CD4-positive, alpha-beta memory T cell (primary cell): ENCODE measurements at regions of chr7 and their contacts with region 1.

Region 1: DNA sequence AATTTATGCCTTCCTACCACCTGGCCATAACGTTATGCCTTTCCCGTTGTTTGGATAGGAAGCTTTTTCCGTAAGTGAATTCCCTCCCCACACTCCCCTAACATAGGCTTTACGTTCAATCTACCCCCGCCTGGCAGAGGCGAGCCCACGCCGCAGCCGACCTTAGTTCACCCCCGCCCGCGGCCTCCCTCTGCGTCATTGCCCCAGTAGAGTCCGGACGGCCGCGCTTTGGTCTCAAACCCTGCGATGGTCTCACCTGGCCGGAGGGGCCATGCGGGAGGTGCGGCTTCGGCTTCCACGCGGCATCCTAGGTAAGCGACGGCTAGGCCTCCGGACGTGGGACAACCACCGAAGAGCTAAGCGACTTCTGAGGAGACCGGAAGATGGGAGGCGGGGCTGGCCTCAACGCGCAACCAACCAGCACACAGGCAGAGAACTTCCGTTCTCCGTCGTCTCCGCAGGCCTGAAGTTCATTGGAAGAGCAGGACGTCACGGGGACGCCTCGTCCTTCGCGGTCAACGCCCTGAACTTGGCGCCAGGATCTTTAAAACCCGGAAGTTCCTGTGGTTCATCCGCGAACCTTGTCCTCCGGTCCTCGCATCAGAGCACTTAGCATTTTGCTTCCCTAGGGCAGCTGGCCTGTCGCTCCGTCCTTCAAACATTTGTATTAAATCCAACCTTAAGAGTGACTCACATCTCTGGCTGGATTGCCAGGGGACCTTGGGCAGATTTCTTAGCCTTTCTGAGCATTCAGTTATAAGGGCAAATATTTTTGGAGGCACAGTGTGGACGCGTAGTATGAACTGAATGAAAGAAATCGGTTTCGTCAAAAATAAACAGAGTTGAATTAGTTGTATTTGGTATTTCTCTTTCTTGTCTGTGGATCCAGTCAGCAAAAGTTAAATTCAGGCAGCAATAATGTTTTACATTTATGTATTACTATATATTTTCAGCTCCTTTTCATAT is at the start of gene CHCHD2:
- DNase-seq: peak; percentile 92 to 98 (median 95)
- H3K4me3 ChIP-seq: peak within 1 kb of the TSS; percentile 71 to 98
- H3K4me3 Mint-ChIP-seq: peak within 1 kb of the TSS; percentile 96 to 99 (median 97)
- H3K27ac ChIP-seq: peak within 1 kb of the TSS; percentile 95
- H3K27ac Mint-ChIP-seq: peak within 1 kb of the TSS; percentile 92 to 99 (median 98)
- H3K4me1 ChIP-seq: peaks cover 28% of the 10 kb centered on the region
- H3K4me1 Mint-ChIP-seq: peaks cover 16 to 46% (median 27%) of the 10 kb centered on the region in 4 donors
- H3K27me3 ChIP-seq: no peaks in the 10 kb centered on the region
- H3K27me3 Mint-ChIP-seq: peaks cover 0 to 2% of the 10 kb centered on the region in 2 donors
- total RNA-seq, gene CHCHD2: 147 to 156 TPM

Region 2: GRCh38 chr7:55629051-55629677 is 477.2 kb before region 1 on chr7:
- CTCF ChIA-PET with region 1: no interaction called
- POLR2A ChIA-PET with region 1: no interaction called
- intact Hi-C with region 1: no loop called
- DNase-seq: no peak
- H3K4me3 ChIP-seq: no peak overlapping the region
- H3K4me3 Mint-ChIP-seq: no peak overlapping the region
- H3K27ac ChIP-seq: no peak overlapping the region
- H3K27ac Mint-ChIP-seq: no peak overlapping the region
- H3K4me1 ChIP-seq: no peaks in the 10 kb centered on the region
- H3K4me1 Mint-ChIP-seq: no peaks in the 10 kb centered on the region
- H3K27me3 ChIP-seq: no peaks in the 10 kb centered on the region
- H3K27me3 Mint-ChIP-seq: peaks cover 5% of the 10 kb centered on the region in 2 donors

Region 3: DNA sequence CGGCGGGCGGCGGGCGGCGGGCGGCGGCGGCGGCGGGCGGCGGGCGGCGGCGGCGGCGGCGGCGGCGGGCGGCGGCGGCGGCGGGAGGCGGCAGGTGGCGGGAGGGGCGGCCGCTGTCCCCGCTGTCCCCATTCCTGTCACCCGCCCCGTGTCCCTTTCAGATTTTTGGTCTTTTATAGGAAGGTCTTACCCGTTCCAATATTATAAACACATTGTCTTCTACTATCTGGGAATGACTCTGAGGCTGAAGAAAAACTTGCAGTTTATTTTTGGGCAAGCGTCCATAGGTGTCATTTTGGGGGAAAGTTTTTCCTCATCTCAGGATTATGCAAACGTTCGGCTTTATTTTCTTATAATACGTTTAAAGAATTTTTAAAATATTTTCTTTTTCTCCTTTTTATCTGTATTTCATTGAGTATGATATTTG is 218.6 kb before region 1 on chr7:
- CTCF ChIA-PET with region 1: no interaction called
- POLR2A ChIA-PET with region 1: no interaction called
- intact Hi-C with region 1: loop called (anchors 5 kb)
- DNase-seq: peak in 2 of 5 donors; percentile 8 to 17
- H3K4me3 ChIP-seq: no peak overlapping the region
- H3K4me3 Mint-ChIP-seq: peak overlapping the region; percentile 81 to 89 (median 87)
- H3K27ac ChIP-seq: no peak overlapping the region
- H3K27ac Mint-ChIP-seq: peak overlapping the region; percentile 74 to 95 (median 88)
- H3K4me1 ChIP-seq: peaks cover 7% of the 10 kb centered on the region
- H3K4me1 Mint-ChIP-seq: peaks cover 5 to 10% (median 6%) of the 10 kb centered on the region in 4 donors
- H3K27me3 ChIP-seq: no peaks in the 10 kb centered on the region
- H3K27me3 Mint-ChIP-seq: peaks cover 0 to 2% of the 10 kb centered on the region in 2 donors

Region 4: GRCh38 chr7:55928006-55928767 is 178.2 kb before region 1 on chr7:
- CTCF ChIA-PET with region 1: no interaction called
- POLR2A ChIA-PET with region 1: no interaction called
- intact Hi-C with region 1: no loop called
- DNase-seq: no peak
- H3K4me3 ChIP-seq: no peak overlapping the region
- H3K4me3 Mint-ChIP-seq: no peak overlapping the region
- H3K27ac ChIP-seq: no peak overlapping the region
- H3K27ac Mint-ChIP-seq: no peak overlapping the region
- H3K4me1 ChIP-seq: no peaks in the 10 kb centered on the region
- H3K4me1 Mint-ChIP-seq: peaks cover 0 to 2% (median 0%) of the 10 kb centered on the region in 4 donors
- H3K27me3 ChIP-seq: no peaks in the 10 kb centered on the region
- H3K27me3 Mint-ChIP-seq: no peaks in the 10 kb centered on the region

Region 5: DNA sequence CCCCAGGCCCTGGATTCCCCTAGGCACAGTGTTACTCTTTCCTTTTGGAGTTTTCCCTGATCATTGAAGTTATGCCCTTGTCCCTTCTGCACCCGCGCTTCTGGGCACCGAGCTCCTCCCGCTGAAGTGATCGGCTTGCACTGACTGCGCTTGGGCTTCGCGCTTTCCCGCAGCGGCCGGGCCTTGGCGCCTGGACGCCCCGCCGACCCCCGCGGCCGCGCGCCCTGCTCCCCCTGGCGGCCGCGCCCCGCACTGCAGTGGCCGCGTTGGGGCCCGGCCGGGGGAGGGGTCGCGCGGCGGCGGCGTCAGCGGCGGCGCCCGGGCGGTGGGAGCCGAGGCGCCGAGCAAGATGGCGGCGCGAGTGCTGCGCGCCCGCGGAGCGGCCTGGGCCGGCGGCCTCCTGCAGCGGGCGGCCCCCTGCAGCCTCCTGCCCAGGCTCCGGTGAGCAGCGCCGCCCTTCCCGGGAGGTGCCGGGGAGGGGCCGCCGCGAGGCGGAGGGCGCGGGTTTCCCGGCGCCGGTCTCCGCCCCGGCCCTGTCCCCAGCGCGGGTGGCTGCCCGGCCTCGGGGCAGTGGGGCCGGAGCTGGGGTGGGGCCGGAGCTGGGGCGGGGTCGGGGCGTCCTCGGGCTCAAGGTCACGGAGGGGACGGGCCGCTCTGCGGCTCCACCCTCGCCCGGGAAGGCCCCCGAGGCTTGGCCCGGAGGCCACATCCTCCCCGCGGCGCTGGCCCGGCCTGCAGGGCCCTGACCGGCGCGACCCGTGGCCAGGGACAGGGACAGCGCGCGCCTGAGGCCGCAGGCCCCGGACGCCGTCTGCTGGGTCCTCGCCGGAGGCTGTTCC is 141.9 kb before region 1 on chr7 and contains the start of gene NIPSNAP2:
- CTCF ChIA-PET with region 1: interaction called, 3 read pairs
- POLR2A ChIA-PET with region 1: interaction called, 6 read pairs
- intact Hi-C with region 1: loop called (anchors 1 kb)
- DNase-seq: peak; percentile 55 to 77 (median 65)
- H3K4me3 ChIP-seq: peak within 1 kb of the TSS; percentile 42 to 62
- H3K4me3 Mint-ChIP-seq: peak within 1 kb of the TSS; percentile 82 to 90 (median 86)
- H3K27ac ChIP-seq: peak within 1 kb of the TSS; percentile 76
- H3K27ac Mint-ChIP-seq: peak within 1 kb of the TSS; percentile 89 to 94 (median 94)
- H3K4me1 ChIP-seq: peaks cover 19% of the 10 kb centered on the region
- H3K4me1 Mint-ChIP-seq: peaks cover 29 to 49% (median 32%) of the 10 kb centered on the region in 4 donors
- H3K27me3 ChIP-seq: no peaks in the 10 kb centered on the region
- H3K27me3 Mint-ChIP-seq: no peaks in the 10 kb centered on the region
- total RNA-seq, gene NIPSNAP2: 29.0 to 33.3 TPM

Region 6: DNA sequence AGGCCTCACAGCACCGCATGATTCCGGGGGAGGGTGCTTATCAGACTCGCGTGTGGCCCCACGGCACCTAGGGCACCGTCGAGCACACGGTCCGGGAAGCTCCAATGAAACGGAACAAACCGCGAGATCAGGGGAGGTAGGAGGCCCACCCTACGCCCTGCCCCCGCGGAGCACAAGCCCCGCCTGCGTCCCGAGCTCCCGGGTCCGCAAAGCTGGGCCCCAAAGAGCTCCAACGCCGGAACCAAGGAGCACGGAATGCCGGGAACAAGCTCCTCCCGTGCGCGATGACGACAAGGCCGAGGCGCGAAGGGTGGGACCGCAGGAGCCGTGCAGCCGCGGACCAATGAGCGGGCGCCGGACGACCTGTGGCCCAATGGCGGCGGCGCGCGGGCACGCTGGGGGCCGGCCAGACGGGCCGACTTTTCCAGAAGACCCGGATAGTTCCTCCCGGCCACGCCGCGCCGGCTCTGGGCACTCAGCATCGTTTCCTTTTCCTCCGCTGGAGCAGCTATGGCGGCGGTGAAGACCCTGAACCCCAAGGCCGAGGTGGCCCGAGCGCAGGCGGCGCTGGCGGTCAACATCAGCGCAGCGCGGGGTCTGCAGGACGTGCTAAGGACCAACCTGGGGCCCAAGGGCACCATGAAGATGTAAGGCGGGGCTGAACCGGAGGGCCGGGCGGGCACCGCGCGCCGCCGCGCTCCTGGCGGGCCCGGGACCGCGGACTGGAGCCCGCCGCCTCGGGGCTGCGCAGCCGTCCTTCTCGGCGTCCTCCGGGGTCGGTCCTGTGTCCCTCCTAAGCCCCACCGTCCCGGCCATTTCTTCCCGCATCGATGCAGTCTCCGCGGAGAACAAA is 54.8 kb before region 1 on chr7 and contains the starts of genes CCT6A and PSPH:
- CTCF ChIA-PET with region 1: interaction called, 3 read pairs
- POLR2A ChIA-PET with region 1: interaction called, 19 read pairs
- intact Hi-C with region 1: loop called (anchors 1 kb)
- DNase-seq: peak; percentile 82 to 89 (median 85)
- H3K4me3 ChIP-seq: peak within 1 kb of the TSS; percentile 10 to 95
- H3K4me3 Mint-ChIP-seq: peak within 1 kb of the TSS; percentile 90 to 99 (median 96)
- H3K27ac ChIP-seq: peak within 1 kb of the TSS; percentile 82
- H3K27ac Mint-ChIP-seq: peak within 1 kb of the TSS; percentile 87 to 98 (median 96)
- H3K4me1 ChIP-seq: peaks cover 41% of the 10 kb centered on the region
- H3K4me1 Mint-ChIP-seq: peaks cover 18 to 44% (median 28%) of the 10 kb centered on the region in 4 donors
- H3K27me3 ChIP-seq: no peaks in the 10 kb centered on the region
- H3K27me3 Mint-ChIP-seq: no peaks in the 10 kb centered on the region
- total RNA-seq, gene CCT6A: 72.9 to 78.2 TPM
- total RNA-seq, gene PSPH: 4.3 to 8.0 TPM